ENCODE measurements at regions of chr18 and their contacts with region 1.

Region 1: DNA sequence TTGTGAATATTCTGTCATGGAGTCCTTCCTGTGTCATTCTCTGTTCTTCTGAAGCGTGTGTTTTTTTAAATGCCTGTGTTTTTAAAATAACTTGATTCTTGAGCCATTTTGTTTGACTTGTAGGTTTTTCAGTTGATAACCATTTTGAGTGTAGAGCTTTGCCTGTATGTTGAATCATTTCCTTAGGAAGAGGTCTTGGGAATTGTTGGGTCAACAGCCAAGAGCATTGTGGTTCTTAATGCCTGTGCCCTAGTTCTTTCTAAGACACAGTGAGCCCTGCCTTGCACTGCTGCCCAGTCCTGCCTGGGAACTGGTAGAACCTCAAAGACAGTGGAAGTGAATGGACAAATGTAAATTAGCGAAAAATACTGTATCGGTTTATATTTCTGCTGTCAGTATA is 25.9 kb downstream of the RAB12 start:
- DNase-seq: no peak
- ATAC-seq: no peak
- H3K4me3 ChIP-seq: no peak overlapping the region
- H3K27ac ChIP-seq: no peak overlapping the region
- H3K4me1 ChIP-seq: no peaks in the 10 kb centered on the region
- H3K27me3 ChIP-seq: no peaks in the 10 kb centered on the region
- CTCF ChIP-seq: no peak
- EP300 ChIP-seq: no peak
- POLR2A ChIP-seq: no peak
- RAD21 ChIP-seq: no peak

Region 2: DNA sequence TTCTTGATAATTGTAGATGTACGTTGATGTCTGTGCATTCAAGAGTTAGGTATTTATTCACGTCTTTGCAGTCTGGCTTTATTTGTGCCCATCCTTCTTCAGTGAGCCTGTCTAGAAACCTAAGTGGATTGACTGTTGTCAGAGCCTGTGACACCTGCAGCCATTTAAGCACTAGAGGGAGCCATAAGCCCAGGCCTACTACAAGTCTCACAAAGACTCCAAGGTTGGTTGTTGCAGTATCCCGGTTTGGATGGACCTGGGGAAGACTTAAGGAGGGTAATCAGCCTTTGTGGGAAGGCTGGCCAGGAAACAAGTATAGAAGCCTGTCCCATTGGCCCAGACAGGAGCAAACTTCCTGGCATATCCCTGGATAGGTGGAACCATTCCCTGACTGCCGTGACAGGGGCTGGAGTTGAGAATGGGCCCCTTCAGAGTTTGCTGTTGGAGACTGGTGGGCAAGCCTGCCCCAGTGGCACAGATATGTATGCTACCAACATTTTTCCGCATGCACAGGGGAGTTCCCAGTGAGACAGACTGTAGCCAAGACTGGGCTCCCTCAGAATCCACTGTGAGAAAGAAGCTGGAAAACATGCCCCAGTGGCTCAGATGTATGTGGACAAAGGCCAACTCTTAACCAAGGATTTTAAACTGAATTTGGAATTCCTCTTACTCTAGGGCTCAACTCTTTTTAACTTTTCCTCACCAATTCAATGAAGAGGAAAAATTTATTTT is 1413.5 kb before region 1 on chr18:
- CTCF ChIA-PET with region 1: no interaction called
- POLR2A ChIA-PET with region 1: no interaction called
- RAD21 ChIA-PET with region 1: no interaction called
- SMC1A ChIA-PET with region 1: no interaction called
- in situ Hi-C with region 1: loop called (anchors 25 kb)
- intact Hi-C with region 1: no loop called
- DNase-seq: peak; percentile 4
- ATAC-seq: peak; percentile 89
- H3K4me3 ChIP-seq: no peak overlapping the region
- H3K27ac ChIP-seq: no peak overlapping the region
- H3K4me1 ChIP-seq: no peaks in the 10 kb centered on the region
- H3K27me3 ChIP-seq: no peaks in the 10 kb centered on the region
- CTCF ChIP-seq: peak; percentile 58 to 80 (median 73)
- EP300 ChIP-seq: no peak
- POLR2A ChIP-seq: no peak
- RAD21 ChIP-seq: peak; percentile 66

Region 3: DNA sequence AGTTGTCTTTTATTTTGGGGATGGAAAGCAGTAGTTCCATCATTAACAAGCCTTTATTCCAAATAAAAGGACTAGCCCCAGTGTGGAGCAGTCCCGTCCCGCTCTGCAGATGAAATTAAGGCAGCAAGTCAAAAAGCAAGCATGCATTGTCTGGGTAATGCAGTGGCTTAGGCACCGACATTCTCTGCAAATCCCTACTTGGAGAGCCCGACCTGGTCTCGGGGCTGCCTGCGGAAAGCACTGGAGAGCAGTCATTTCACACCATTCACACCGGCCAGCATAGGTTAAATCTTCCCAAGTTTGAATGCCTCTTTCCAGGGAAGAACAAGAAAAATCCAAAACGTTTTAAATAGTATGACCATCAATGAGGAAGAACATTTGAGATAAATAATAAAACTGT is 50.3 kb before region 1 on chr18:
- CTCF ChIA-PET with region 1: no interaction called
- POLR2A ChIA-PET with region 1: no interaction called
- RAD21 ChIA-PET with region 1: no interaction called
- SMC1A ChIA-PET with region 1: no interaction called
- in situ Hi-C with region 1: no loop called
- intact Hi-C with region 1: loop called (anchors 5 kb)
- DNase-seq: no peak
- ATAC-seq: no peak
- H3K4me3 ChIP-seq: no peak overlapping the region
- H3K27ac ChIP-seq: no peak overlapping the region
- H3K4me1 ChIP-seq: no peaks in the 10 kb centered on the region
- H3K27me3 ChIP-seq: no peaks in the 10 kb centered on the region
- CTCF ChIP-seq: no peak
- EP300 ChIP-seq: no peak
- POLR2A ChIP-seq: no peak
- RAD21 ChIP-seq: no peak

Region 4: DNA sequence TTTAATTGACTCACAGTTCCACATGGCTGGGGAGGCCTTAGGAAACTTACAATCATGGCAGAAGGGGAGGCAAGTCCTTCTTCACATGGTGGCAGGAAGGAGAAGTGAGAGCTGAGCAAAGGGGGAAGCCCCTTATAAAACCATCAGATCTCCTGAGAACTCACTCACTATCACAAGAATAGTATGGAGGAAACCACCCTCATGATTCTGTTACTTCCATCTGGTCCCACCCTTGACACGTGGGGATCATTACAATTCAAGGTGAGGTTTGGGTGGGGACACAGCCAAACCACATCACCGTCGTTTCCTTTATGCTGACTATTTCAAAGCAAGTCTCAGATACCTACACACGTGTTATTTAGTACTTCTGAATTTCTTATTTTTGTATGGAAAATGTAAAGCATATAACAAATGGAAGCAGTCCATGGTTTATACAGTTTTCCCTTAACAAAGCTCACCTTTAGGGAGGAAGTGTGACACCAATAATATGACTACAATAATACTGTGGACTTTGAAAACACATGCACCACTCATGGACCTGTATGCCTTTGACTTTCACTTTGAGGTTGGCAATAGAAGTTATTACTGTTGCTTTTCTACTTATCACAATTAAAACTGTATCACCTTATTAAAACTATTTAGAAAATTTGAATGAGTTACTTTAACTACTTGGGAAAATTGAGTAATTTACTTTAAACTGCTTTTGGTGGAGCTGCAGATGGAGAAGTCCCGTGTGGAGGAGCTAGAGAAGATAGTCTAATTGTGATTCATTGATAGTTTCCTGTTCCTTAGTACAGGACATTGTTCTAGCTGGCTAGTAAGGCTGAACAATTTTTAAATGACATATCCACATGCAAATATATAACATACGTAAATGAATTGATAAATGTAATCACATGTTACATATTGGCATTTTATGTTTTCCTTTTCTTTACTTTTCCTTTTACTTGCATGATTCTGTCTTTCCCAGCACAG is 107.6 kb after region 1 on chr18:
- CTCF ChIA-PET with region 1: no interaction called
- POLR2A ChIA-PET with region 1: no interaction called
- RAD21 ChIA-PET with region 1: no interaction called
- SMC1A ChIA-PET with region 1: no interaction called
- in situ Hi-C with region 1: no loop called
- intact Hi-C with region 1: no loop called
- DNase-seq: no peak
- ATAC-seq: no peak
- H3K4me3 ChIP-seq: no peak overlapping the region
- H3K27ac ChIP-seq: no peak overlapping the region
- H3K4me1 ChIP-seq: no peaks in the 10 kb centered on the region
- H3K27me3 ChIP-seq: no peaks in the 10 kb centered on the region
- CTCF ChIP-seq: no peak
- EP300 ChIP-seq: no peak
- POLR2A ChIP-seq: no peak
- RAD21 ChIP-seq: no peak

Region 5: DNA sequence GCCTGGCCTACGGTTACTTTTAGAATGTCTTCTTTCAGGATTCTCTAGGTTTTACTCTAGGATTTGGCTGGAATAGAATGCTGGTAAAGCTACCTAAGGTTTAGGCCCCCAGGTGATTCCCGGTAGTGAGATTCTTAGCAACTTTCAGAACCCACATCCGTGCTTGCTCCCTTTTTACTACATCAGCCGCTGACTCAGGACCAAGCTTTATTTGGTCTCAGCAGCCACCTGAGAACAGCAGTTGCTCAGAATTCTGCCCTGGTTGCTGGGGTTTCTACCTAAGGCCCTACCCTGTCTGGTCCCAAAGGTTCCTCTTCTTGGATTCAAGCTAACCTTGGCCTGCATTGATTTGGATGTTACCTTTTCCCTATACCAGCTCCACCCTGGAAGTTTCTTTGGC is 431.3 kb after region 1 on chr18:
- CTCF ChIA-PET with region 1: no interaction called
- POLR2A ChIA-PET with region 1: no interaction called
- RAD21 ChIA-PET with region 1: no interaction called
- SMC1A ChIA-PET with region 1: no interaction called
- in situ Hi-C with region 1: no loop called
- intact Hi-C with region 1: no loop called
- DNase-seq: no peak
- ATAC-seq: peak; percentile 53
- H3K4me3 ChIP-seq: peak overlapping the region; percentile 8; the same call in 1 of the 2 replicates
- H3K27ac ChIP-seq: peak overlapping the region; percentile 96
- H3K4me1 ChIP-seq: peaks cover 72% of the 10 kb centered on the region
- H3K27me3 ChIP-seq: no peaks in the 10 kb centered on the region
- CTCF ChIP-seq: no peak
- EP300 ChIP-seq: no peak
- POLR2A ChIP-seq: peak; percentile 4; the same call in 1 of the 2 replicates
- RAD21 ChIP-seq: no peak